ENCODE measurements at regions of chr12 and their contacts with region 1.

Region 1: GRCh38 chr12:54398995-54399793 is 14.7 kb upstream of the ZNF385A start:
- DNase-seq: peak; percentile 92
- ATAC-seq: peak; percentile 97
- H3K4me3 ChIP-seq: no peak overlapping the region
- H3K27ac ChIP-seq: no peak overlapping the region
- H3K4me1 ChIP-seq: no peaks in the 10 kb centered on the region
- H3K27me3 ChIP-seq: no peaks in the 10 kb centered on the region
- CTCF ChIP-seq: peak; percentile 98

Region 2: DNA sequence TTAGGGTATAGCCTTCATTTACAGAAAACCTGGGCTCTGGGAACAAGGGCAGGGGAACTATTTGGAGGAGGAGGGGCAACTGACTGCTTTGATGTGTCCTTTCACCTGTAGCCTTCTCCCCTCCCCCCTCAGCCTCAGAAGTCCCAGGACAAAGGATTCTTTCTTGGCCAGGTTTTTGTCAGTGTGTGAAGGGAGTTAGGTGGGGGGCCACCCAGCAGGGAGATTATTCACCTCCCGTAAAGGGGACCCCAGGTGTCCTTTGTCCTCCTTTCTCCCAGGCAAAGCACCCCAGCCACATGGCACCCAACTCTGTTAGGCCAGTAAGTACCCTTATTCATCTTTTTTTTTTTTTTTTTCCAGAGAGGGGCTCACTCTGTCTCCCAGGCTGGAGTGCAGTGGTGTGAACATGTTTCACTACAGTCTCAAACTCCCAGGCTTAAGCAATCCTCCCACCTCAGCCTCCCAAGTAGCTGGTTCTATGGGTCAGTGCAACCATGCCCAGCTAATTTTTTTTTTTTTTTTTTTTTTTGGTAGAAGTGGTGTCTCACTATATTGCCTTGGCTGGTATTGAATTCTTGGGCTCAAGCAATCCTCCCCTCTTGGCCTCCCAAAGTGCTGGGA is 97.7 kb before region 1 on chr12:
- CTCF ChIA-PET with region 1: interaction called, 13 read pairs
- POLR2A ChIA-PET with region 1: no interaction called
- intact Hi-C with region 1: no loop called
- DNase-seq: peak; percentile 2
- ATAC-seq: no peak
- H3K4me3 ChIP-seq: peak overlapping the region; percentile 62; the same call in 1 of the 2 replicates
- H3K27ac ChIP-seq: no peak overlapping the region
- H3K4me1 ChIP-seq: peaks cover 24% of the 10 kb centered on the region
- H3K27me3 ChIP-seq: no peaks in the 10 kb centered on the region
- CTCF ChIP-seq: no peak

Region 3: GRCh38 chr12:54368709-54369583 is 30.2 kb before region 1 on chr12:
- CTCF ChIA-PET with region 1: interaction called, 11 read pairs
- POLR2A ChIA-PET with region 1: no interaction called
- intact Hi-C with region 1: no loop called
- DNase-seq: peak; percentile 91
- ATAC-seq: peak; percentile 79
- H3K4me3 ChIP-seq: peak overlapping the region; percentile 37; the same call in 1 of the 2 replicates
- H3K27ac ChIP-seq: no peak overlapping the region
- H3K4me1 ChIP-seq: peaks cover 14% of the 10 kb centered on the region
- H3K27me3 ChIP-seq: no peaks in the 10 kb centered on the region
- CTCF ChIP-seq: peak; percentile 93

Region 4: DNA sequence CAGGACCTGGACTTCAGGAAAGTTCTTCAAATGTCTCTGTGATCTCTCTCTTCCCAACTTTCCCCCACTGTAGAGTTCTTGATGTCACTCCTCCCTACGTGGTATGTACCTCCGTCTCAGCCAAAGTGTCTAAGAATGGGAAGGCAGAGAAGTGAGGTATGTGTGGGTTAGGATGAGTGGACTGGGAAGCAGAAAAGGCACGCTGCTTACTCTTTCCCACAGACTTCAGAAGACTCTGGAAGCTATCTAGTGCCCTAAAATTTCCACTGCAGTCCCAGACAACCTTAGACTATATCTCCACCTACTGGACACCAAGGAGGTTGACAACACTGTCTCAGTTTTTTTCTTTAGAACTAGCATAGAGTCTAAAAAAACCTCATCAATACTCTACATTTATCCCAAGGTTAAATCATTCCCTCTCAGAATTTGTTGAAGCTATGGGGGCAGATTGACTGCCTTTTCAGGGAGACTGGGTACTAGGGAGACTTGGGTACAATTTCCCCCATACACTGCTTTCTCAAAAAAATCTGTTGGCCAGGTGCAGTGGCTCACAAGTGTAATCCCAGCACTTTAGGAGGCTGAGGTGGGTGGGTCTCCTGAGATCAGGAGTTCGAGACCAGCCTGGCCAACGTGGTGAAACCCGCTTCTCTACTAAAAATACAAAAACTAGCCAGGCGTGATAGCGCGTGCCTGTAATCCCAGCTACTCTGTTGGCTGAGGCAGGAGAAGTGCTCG is 40.5 kb after region 1 on chr12:
- CTCF ChIA-PET with region 1: interaction called, 101 read pairs
- POLR2A ChIA-PET with region 1: no interaction called
- intact Hi-C with region 1: loop called (anchors 1 kb)
- DNase-seq: peak; percentile 72
- ATAC-seq: peak; percentile 75
- H3K4me3 ChIP-seq: no peak overlapping the region
- H3K27ac ChIP-seq: no peak overlapping the region
- H3K4me1 ChIP-seq: peaks cover 20% of the 10 kb centered on the region; the same call in 1 of the 2 replicates
- H3K27me3 ChIP-seq: peaks cover 9% of the 10 kb centered on the region; the same call in 1 of the 2 replicates
- CTCF ChIP-seq: peak; percentile 90

Region 5: GRCh38 chr12:54571193-54572188 is 172.3 kb after region 1 on chr12:
- CTCF ChIA-PET with region 1: no interaction called
- POLR2A ChIA-PET with region 1: no interaction called
- intact Hi-C with region 1: no loop called
- DNase-seq: no peak
- ATAC-seq: no peak
- H3K4me3 ChIP-seq: no peak overlapping the region
- H3K27ac ChIP-seq: no peak overlapping the region
- H3K4me1 ChIP-seq: no peaks in the 10 kb centered on the region
- H3K27me3 ChIP-seq: peaks cover 56% of the 10 kb centered on the region
- CTCF ChIP-seq: no peak